Psoas muscle (tissue), 8 donors: ENCODE measurements at regions of chr11 and their contacts with region 1.

Region 1: GRCh38 chr11:18294862-18295261 is 27.1 kb downstream of the HPS5 start:
- DNase-seq: no peak
- ATAC-seq: no peak
- H3K4me3 ChIP-seq: no peak overlapping the region
- H3K27ac ChIP-seq: no peak overlapping the region
- H3K4me1 ChIP-seq: no peaks in the 10 kb centered on the region
- H3K27me3 ChIP-seq: no peaks in the 10 kb centered on the region
- CTCF ChIP-seq: no peak

Region 2: GRCh38 chr11:18203723-18204122 is 91.1 kb before region 1 on chr11:
- intact Hi-C with region 1: no loop called
- DNase-seq: no peak
- ATAC-seq: no peak
- H3K4me3 ChIP-seq: no peak overlapping the region
- H3K27ac ChIP-seq: no peak overlapping the region
- H3K4me1 ChIP-seq: no peaks in the 10 kb centered on the region
- H3K27me3 ChIP-seq: peaks cover 0 to 19% (median 0%) of the 10 kb centered on the region in 3 donors
- CTCF ChIP-seq: no peak

Region 3: DNA sequence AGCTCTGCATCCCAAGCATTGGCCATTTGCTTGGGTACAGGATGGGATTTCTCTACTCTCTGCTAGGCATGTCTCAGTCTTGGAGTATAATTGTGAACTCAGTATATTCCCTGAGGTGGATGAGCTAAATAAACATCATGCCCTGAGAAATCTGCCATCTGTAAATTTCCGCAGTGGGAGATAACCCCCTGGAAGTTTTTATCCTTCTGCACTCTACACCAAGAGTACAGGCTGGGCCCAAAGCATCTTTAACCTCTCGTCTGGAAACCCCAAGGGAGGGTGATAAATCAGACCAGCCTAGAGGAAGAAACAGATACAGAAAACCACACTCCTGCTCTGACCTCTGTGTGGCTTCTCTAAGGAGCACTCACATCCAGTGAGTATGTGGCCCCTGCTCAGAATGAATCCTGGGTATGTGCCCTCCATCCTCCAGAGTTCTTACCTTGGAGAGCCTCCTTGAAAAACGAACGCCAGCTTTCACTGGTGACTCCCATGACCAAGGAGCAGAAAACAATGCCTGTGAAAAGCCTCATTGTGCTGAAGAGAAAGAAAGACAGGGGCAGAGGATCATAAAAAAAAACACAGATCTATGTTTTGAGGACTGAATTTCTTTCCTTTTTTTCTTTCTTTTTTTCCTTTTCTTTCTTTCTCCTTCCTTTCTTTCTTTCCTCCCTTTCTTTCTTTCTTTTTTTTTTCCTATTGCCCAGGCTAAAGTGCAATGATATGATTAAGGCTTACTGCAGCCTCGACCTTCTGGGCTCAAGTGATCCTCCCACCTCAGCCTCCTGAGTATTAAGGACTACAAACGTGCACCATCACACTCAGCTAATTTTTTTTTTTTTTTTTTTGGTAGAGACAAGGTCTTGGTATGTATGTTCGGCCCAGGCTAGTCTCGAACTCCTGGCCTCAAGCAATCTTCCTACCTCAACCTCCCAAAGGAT is 59.2 kb before region 1 on chr11:
- intact Hi-C with region 1: no loop called
- DNase-seq: no peak
- ATAC-seq: no peak
- H3K4me3 ChIP-seq: no peak overlapping the region
- H3K27ac ChIP-seq: no peak overlapping the region
- H3K4me1 ChIP-seq: no peaks in the 10 kb centered on the region
- H3K27me3 ChIP-seq: peaks cover 0 to 3% (median 2%) of the 10 kb centered on the region in 3 donors
- CTCF ChIP-seq: no peak

Region 4: GRCh38 chr11:18485913-18486528 is 191.2 kb after region 1 on chr11:
- intact Hi-C with region 1: loop called in 1 of 2 experiments (anchors 10 kb)
- DNase-seq: no peak
- ATAC-seq: no peak
- H3K4me3 ChIP-seq: no peak overlapping the region
- H3K27ac ChIP-seq: no peak overlapping the region
- H3K4me1 ChIP-seq: no peaks in the 10 kb centered on the region
- H3K27me3 ChIP-seq: no peaks in the 10 kb centered on the region
- CTCF ChIP-seq: no peak

Region 5: DNA sequence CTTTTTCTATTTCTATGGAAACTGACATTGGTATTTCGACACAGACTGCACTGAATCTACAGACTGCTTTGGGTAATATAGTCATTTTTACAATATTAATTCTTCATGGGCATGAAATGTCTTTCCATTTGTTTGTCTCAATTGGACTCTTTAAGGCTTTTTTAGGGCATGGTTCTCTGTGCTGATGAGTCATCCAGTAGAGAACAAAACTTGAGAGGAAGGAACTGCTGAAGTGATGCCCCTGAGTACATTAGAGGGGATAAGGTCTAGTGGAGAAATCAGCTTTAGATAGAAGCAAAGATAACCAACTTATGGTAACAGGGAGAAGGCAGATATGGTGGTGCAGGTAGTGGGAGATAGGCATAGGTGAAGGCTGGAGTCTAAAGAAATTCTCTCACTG is 206.8 kb after region 1 on chr11:
- intact Hi-C with region 1: loop called in 1 of 2 experiments (anchors 10 kb)
- DNase-seq: no peak
- ATAC-seq: no peak
- H3K4me3 ChIP-seq: no peak overlapping the region
- H3K27ac ChIP-seq: no peak overlapping the region
- H3K4me1 ChIP-seq: no peaks in the 10 kb centered on the region
- H3K27me3 ChIP-seq: no peaks in the 10 kb centered on the region
- CTCF ChIP-seq: no peak